HepG2 (cell line): ENCODE measurements at regions of chr10 and their contacts with region 1.

Region 1: DNA sequence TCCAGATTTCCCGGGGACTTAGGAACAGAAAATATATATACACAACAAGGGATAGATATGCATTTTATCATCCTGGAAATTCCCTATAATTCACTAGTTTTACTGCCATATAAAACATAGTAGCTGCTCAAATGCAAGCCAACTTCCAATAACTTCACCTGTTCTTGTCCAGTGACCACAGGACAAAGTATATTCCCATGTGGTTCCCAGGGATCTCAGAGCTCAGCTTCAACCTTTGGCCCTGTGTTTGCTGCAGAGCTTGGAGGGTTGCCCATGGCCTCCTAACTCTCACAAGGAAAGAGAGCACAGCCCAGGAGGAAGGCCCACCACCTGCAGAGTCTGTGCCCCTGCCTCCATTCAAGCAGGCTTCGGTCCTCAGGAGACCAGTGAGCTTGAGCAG is 4.5 kb upstream of the DRGX start:
- DNase-seq: no peak
- ATAC-seq: no peak
- H3K4me3 ChIP-seq: no peak overlapping the region
- H3K27ac ChIP-seq: no peak overlapping the region
- H3K4me1 ChIP-seq: no peaks in the 10 kb centered on the region
- H3K27me3 ChIP-seq: peaks cover 5 to 62% of the 10 kb centered on the region in 2 experiments
- CTCF ChIP-seq: no peak
- EP300 ChIP-seq: no peak
- POLR2A ChIP-seq: no peak
- RAD21 ChIP-seq: no peak

Region 2: DNA sequence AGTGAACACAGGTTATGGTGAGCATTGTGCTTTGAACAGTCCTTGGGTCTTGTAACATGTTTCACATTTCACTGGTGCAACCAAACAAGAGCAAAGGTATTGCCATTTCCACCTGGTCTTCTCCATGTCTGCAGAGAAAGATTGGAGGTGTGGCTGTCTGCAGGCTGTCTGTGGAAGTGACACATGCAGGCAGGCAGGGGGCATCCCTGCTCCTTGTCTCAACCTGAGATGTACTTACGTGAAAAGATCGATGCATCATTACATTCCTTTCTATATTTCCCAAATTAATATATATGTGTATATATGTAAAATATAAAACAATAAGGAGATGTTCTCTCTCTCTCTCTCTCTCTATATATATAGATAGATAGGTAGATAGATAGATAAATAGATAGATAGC is 515.0 kb before region 1 on chr10:
- CTCF ChIA-PET with region 1: no interaction called
- POLR2A ChIA-PET with region 1: no interaction called
- in situ Hi-C with region 1: no loop called
- intact Hi-C with region 1: no loop called
- DNase-seq: peak; percentile 3
- ATAC-seq: peak; percentile 58; the same call in 2 of the 3 replicates
- H3K4me3 ChIP-seq: no peak overlapping the region
- H3K27ac ChIP-seq: no peak overlapping the region
- H3K4me1 ChIP-seq: no peaks in the 10 kb centered on the region
- H3K27me3 ChIP-seq: no peaks in the 10 kb centered on the region
- CTCF ChIP-seq: peak; percentile 51
- EP300 ChIP-seq: no peak
- POLR2A ChIP-seq: no peak
- RAD21 ChIP-seq: no peak

Region 3: GRCh38 chr10:49512121-49512809 is 111.9 kb after region 1 on chr10:
- CTCF ChIA-PET with region 1: interaction called, 4 read pairs
- POLR2A ChIA-PET with region 1: no interaction called
- in situ Hi-C with region 1: loop called (anchors 5 kb)
- intact Hi-C with region 1: no loop called
- DNase-seq: peak; percentile 16
- ATAC-seq: peak; percentile 87
- H3K4me3 ChIP-seq: no peak overlapping the region
- H3K27ac ChIP-seq: no peak overlapping the region
- H3K4me1 ChIP-seq: no peaks in the 10 kb centered on the region
- H3K27me3 ChIP-seq: no peaks in the 10 kb centered on the region; a peak in 1 of 5 replicates
- CTCF ChIP-seq: peak; percentile 72
- EP300 ChIP-seq: no peak
- POLR2A ChIP-seq: no peak
- RAD21 ChIP-seq: peak; percentile 54; the same call in 1 of the 2 replicates